ENCODE measurements at regions of chr7 and their contacts with region 1.

Region 1: GRCh38 chr7:2632733-2633537 is 1.1 kb downstream of the TTYH3 start:
- DNase-seq: peak; percentile 64
- ATAC-seq: peak; percentile 20
- H3K4me3 Mint-ChIP-seq: peak overlapping the region; percentile 90
- H3K27ac Mint-ChIP-seq: peak overlapping the region; percentile 87
- H3K4me1 Mint-ChIP-seq: peaks cover 5% of the 10 kb centered on the region
- H3K27me3 Mint-ChIP-seq: peaks cover 11% of the 10 kb centered on the region

Region 2: DNA sequence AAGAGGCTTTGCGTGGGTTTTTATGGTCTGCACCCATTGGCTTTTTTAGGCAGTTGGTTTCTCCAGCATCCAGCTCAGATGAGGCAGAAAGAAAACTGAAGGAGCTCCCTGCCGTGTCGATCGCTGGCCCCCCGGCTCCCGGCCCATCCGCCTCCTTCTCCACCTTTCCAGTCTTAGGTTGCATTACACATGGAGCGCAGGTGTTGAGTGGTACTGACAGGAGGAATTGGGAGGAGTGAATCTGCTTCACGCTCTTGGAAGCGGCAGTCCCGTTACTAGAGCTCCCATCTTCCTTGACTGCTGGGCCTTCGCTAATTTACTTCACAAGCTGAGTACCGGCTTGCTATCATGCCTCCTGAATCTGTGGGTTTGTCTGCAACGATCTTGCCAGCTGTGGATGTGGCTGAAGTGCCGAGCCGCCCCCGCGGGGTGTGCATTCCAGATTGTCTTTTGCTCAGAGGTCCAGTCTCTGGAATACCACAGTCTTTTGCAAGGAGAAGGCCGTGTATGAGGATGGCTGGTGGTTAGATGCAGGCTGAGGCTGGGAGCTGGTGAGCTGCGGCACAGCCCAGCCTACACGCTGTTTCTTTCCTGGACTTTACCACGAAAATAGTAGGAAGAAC is 57.1 kb before region 1 on chr7:
- POLR2A ChIA-PET with region 1: no interaction called
- DNase-seq: no peak
- ATAC-seq: no peak
- H3K4me3 Mint-ChIP-seq: no peak overlapping the region
- H3K27ac Mint-ChIP-seq: no peak overlapping the region
- H3K4me1 Mint-ChIP-seq: peaks cover 19% of the 10 kb centered on the region
- H3K27me3 Mint-ChIP-seq: no peaks in the 10 kb centered on the region

Region 3: GRCh38 chr7:2621061-2621828 is 11.7 kb before region 1 on chr7:
- POLR2A ChIA-PET with region 1: no interaction called
- DNase-seq: no peak
- ATAC-seq: no peak
- H3K4me3 Mint-ChIP-seq: no peak overlapping the region
- H3K27ac Mint-ChIP-seq: no peak overlapping the region
- H3K4me1 Mint-ChIP-seq: peaks cover 3% of the 10 kb centered on the region
- H3K27me3 Mint-ChIP-seq: peaks cover 10% of the 10 kb centered on the region

Region 4: DNA sequence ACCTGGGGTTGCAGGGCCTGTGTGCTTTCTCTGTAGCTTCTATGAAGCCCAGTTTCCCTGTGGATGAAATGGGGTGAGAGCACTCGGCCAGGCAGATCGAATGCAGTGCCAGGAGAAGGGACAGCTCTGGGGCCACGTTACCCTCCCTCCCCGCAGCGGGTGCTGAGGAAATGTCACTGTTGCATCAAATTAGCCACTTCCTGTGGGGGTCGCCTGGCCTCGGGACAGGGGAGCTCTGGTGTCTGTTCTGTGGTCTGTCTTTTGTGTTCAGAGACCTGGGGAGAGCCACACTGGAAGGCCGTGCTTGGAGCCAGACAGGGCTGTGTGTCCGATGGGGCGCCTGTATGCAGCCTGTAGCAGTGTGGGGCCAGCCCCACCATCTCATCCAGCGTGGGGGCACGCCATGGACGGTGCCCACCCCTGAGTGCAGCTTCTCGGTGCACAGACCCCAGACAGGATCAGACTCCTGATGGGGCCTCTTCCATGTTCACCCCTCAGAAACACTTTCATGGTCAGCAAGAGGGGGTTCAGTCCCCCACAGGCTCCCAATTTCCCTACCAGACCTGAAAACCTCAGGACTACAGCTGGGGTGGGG is 12.4 kb after region 1 on chr7:
- POLR2A ChIA-PET with region 1: interaction called, 42 read pairs
- DNase-seq: peak; percentile 77
- ATAC-seq: peak; percentile 77
- H3K4me3 Mint-ChIP-seq: peak overlapping the region; percentile 78
- H3K27ac Mint-ChIP-seq: peak overlapping the region; percentile 91
- H3K4me1 Mint-ChIP-seq: peaks cover 12% of the 10 kb centered on the region
- H3K27me3 Mint-ChIP-seq: no peaks in the 10 kb centered on the region

Measured in activated naive CD8-positive, alpha-beta T cell treated with anti-CD3 and anti-CD28 coated beads, Interleukin-2, amount 10 ng/mL, durations not matched to agents 7 days and 5 days (primary cell).